HCT116 (cell line): ENCODE measurements at regions of chr7 and their contacts with region 1.

Region 1: GRCh38 chr7:2821161-2821841 is 22.8 kb downstream of the GNA12 start:
- DNase-seq: no peak
- ATAC-seq: peak; percentile 74
- H3K4me3 ChIP-seq: no peak overlapping the region
- H3K27ac ChIP-seq: no peak overlapping the region
- H3K4me1 ChIP-seq: peaks cover 0 to 13% of the 10 kb centered on the region in 2 experiments; a peak in 1 of 4 replicates
- H3K27me3 ChIP-seq: no peaks in the 10 kb centered on the region
- CTCF ChIP-seq: peak in 2 of 3 experiments; percentile 27 to 47; a peak in 3 of 6 replicates
- POLR2A ChIP-seq: no peak
- RAD21 ChIP-seq: peak; percentile 49

Region 2: GRCh38 chr7:2720582-2721491 is 100.5 kb before region 1 on chr7:
- CTCF ChIA-PET with region 1: no interaction called
- POLR2A ChIA-PET with region 1: no interaction called
- RAD21 ChIA-PET with region 1: no interaction called
- intact Hi-C with region 1: loop called (anchors 5 kb)
- DNase-seq: peak; percentile 85
- ATAC-seq: peak; percentile 89
- H3K4me3 ChIP-seq: no peak overlapping the region
- H3K27ac ChIP-seq: peak overlapping the region; percentile 34; the same call in 1 of the 2 replicates
- H3K4me1 ChIP-seq: peaks cover 11 to 14% of the 10 kb centered on the region in 2 experiments
- H3K27me3 ChIP-seq: no peaks in the 10 kb centered on the region
- CTCF ChIP-seq: peak; percentile 25 to 82 (median 28); a peak in 5 of 6 replicates
- POLR2A ChIP-seq: no peak
- RAD21 ChIP-seq: peak; percentile 89